Dorsolateral prefrontal cortex (tissue), 120 donors: ENCODE measurements at regions of chrX and their contacts with region 1.

Region 1: GRCh38 chrX:74291964-74292807 is 11.8 kb upstream of the ZCCHC13 start:
- DNase-seq: peak; percentile 74 to 94 (median 88)
- H3K4me3 ChIP-seq: peak overlapping the region; percentile 47 to 80 (median 65)
- H3K27ac ChIP-seq: peak overlapping the region; percentile 52 to 96 (median 89)
- H3K27me3 ChIP-seq: peaks cover 0 to 56% (median 5%) of the 10 kb centered on the region in 45 donors
- CTCF ChIP-seq: peak in 51 of 56 donors; percentile 18 to 59 (median 36)

Region 2: DNA sequence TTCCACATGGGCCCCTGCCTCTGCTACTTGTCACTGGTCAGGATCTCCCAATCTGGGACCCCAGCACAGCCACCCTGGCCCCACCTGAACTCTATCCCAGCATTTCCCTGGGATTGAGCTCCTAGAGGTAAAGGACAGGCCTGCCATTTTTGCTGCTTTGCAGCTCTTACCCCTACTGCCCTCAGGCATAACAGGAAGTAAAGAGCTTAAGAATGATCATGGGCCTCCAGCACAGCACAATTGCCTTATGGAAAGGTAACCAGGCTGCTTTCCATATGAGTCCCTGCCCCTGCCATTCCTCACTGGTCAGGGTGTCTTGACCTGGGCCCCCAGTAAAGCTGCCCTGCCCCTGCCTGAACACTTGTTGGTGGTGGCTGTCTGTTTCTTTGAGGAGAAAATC is 243.0 kb before region 1 on chrX:
- intact Hi-C with region 1: no loop called
- DNase-seq: no peak
- H3K4me3 ChIP-seq: no peak overlapping the region
- H3K27ac ChIP-seq: no peak overlapping the region
- H3K27me3 ChIP-seq: peaks cover 0 to 31% (median 0%) of the 10 kb centered on the region in 45 donors
- CTCF ChIP-seq: no peak

Region 3: DNA sequence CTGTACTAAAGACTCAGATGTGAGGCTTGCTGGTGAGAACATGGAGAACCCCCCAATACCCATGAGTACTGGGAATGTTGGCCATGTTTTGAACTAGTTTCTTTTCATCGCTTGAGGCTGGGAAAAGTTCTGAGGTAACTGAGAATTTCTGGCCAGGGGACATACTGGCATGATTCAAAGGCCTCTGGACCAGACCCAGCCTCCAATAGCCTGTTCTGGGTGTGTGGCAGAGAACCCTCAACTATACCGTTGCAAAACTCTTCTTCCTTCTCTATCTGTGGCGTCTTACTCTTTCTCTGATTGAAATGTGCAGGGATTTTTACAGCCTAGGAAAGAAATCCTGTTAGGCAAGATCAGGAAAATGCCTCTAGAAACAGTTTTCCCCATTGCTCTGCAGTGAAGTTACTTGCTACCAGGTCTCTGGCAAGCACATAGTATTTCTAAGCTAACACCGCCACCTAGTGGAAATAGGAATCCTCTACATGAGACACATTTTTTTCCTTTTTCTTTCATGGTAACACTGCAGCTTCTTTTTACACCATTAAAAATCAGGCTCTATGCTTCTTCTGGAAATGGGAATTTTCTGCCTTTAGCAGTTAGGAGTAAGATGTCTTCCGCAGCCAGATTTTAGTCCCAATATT is 158.9 kb before region 1 on chrX:
- intact Hi-C with region 1: loop called in 1 of 2 experiments (anchors 5 kb)
- DNase-seq: peak in 1 of 10 donors; percentile 29
- H3K4me3 ChIP-seq: no peak overlapping the region
- H3K27ac ChIP-seq: peak overlapping the region in 4 of 59 donors; percentile 8 to 38 (median 18)
- H3K27me3 ChIP-seq: peaks cover 0 to 40% (median 3%) of the 10 kb centered on the region in 45 donors
- CTCF ChIP-seq: peak; percentile 46 to 96 (median 84)

Region 4: DNA sequence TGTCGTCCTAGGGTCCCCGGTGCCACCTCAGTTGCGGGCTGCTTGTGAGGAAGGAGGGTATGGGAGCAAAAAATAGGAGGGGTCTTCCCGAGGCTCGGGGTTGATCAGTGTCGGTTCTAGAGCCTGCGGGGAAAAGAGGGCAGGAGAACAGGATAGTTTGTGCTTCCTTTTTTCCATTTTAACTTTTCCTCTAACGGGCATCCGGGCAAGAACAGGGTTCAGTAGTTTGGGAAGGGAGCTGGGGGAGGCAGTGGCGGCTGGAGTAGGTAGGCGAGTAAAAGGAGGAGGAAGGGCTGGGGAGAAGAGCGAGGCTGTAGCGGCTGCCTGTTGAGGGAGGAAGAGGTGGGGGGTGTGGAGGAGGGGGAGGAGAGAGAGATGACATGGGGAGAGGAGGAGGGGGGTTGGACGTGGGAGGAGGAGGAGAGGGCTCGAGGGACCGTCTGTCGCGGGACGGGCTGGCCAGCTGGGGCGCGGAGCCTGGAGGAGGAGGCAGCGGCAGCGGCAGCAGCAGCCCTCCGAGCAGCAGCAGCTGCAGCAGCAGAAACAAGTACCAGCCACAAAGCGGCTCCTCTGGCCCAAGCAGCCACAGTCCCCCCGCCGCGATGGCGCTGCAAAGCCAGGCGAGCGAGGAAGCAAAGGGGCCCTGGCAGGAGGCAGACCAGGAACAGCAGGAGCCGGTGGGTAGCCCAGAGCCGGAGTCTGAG is 129.0 kb after region 1 on chrX and contains the start of gene SLC16A2:
- intact Hi-C with region 1: loop called in 1 of 2 experiments (anchors 5 kb)
- DNase-seq: peak; percentile 47 to 79 (median 64)
- H3K4me3 ChIP-seq: peak within 1 kb of the TSS; percentile 42 to 74 (median 59)
- H3K27ac ChIP-seq: peak within 1 kb of the TSS; percentile 40 to 94 (median 85)
- H3K27me3 ChIP-seq: peaks cover 0 to 82% (median 17%) of the 10 kb centered on the region in 45 donors
- CTCF ChIP-seq: peak in 3 of 56 donors; percentile 8 to 14 (median 9)
- total RNA-seq, gene SLC16A2: 9.2 to 23.2 (median 14.5) TPM